ENCODE measurements at regions of chr9 and their contacts with region 1.

Region 1: GRCh38 chr9:128992995-128993394 is 35.1 kb downstream of the SH3GLB2 start:
- DNase-seq: peak; percentile 5 to 35 (median 31)
- H3K4me3 ChIP-seq: no peak overlapping the region
- H3K27ac ChIP-seq: no peak overlapping the region
- H3K4me1 ChIP-seq: no peaks in the 10 kb centered on the region
- H3K27me3 ChIP-seq: no peaks in the 10 kb centered on the region

Region 2: GRCh38 chr9:128927731-128928411 is 65.1 kb before region 1 on chr9:
- CTCF ChIA-PET with region 1: no interaction called
- POLR2A ChIA-PET with region 1: no interaction called
- DNase-seq: peak in 2 of 3 donors; percentile 14 to 38
- H3K4me3 ChIP-seq: no peak overlapping the region
- H3K27ac ChIP-seq: no peak overlapping the region
- H3K4me1 ChIP-seq: peaks cover 0 to 4% (median 0%) of the 10 kb centered on the region in 4 experiments
- H3K27me3 ChIP-seq: no peaks in the 10 kb centered on the region

Region 3: GRCh38 chr9:129006328-129007034 is 13.5 kb after region 1 on chr9:
- CTCF ChIA-PET with region 1: interaction called, 30 read pairs
- POLR2A ChIA-PET with region 1: no interaction called
- DNase-seq: peak; percentile 58 to 76 (median 66)
- H3K4me3 ChIP-seq: no peak overlapping the region
- H3K27ac ChIP-seq: no peak overlapping the region
- H3K4me1 ChIP-seq: no peaks in the 10 kb centered on the region
- H3K27me3 ChIP-seq: no peaks in the 10 kb centered on the region